AG04449 (cell line): ENCODE measurements at regions of chr18 and their contacts with region 1.

Region 1: GRCh38 chr18:72762515-72763122 is 105.2 kb downstream of the NETO1 start:
- DNase-seq: peak; percentile 33
- H3K4me3 ChIP-seq: no peak overlapping the region
- CTCF ChIP-seq: peak; percentile 46

Region 2: GRCh38 chr18:72470391-72470790 is 292.2 kb before region 1 on chr18:
- CTCF ChIA-PET with region 1: no interaction called
- POLR2A ChIA-PET with region 1: no interaction called
- DNase-seq: no peak
- H3K4me3 ChIP-seq: no peak overlapping the region
- CTCF ChIP-seq: no peak

Region 3: DNA sequence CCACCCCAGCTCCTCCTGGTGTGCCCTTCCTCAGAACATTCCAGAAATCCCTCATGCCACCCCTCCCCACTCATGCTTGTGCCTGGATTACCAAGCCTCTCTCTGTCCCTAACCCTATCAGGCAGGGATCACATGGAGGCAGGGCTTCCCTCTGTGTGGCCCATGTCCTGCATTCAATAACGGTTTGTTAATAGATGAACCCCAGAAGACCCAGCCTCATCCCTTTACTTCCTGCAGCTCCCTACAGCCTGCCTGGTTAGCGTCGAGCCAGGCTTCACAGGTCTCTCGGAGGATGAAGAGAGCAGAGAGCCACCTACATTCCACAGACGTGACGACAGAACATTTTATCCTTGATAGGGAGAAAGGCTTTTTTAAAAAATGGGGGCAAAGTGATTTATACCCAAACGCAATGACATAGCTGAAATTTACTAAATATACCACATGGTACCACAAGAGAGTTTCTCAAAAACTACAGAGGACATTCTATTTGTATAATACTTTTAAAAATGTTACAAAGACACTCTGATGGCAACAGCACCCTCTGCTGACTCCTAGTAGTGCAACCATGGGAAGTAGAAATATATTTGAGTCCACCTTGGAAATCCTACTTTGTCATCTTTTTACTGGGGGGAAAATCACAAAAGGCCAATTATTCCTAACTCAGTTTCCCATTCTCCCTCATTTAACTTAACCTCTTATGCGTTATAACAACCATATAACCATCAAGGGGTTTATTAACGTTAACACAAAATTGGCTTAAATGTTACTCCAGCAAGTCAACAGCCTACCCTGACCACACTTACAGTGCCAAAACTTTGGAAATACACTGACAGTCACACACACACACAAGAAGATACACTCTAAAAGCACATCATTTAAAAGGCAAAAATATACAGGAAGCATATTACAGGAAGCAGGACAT is 1354.3 kb after region 1 on chr18:
- CTCF ChIA-PET with region 1: interaction called, 78 read pairs
- POLR2A ChIA-PET with region 1: no interaction called
- DNase-seq: no peak
- H3K4me3 ChIP-seq: no peak overlapping the region
- CTCF ChIP-seq: peak; percentile 52